H1 (cell line): ENCODE measurements at regions of chr17 and their contacts with region 1.

Region 1: DNA sequence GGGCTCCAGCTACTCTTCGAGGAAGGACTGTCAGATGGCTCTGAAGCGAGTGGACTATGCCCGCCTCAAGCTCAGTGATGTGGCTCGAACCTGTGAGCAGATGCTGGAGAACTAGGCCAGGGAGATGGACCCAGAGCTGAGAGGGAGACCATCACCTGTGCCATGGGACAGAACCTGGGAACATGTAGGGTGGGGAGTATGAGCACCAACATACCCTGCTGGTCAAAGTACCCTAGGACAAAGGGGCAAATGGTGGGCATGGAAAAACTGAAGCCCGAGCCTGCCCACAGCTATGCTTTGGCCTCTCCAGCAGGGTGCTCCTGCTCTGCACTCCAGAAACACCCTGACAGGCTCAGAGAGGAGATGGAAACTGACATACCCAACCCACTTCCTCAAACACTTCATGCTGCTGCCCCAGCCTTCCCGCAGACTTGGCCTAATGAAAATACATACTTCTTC is 1.9 kb downstream of the MED11 start:
- DNase-seq: no peak
- H3K4me3 ChIP-seq: no peak overlapping the region
- H3K27ac ChIP-seq: no peak overlapping the region
- H3K4me1 ChIP-seq: peaks cover 0 to under 1% (median 0%) of the 10 kb centered on the region in 4 experiments; a peak in 2 of 7 replicates
- H3K27me3 ChIP-seq: peaks cover 1 to 17% (median 6%) of the 10 kb centered on the region in 4 experiments; a peak in 6 of 7 replicates
- CTCF ChIP-seq: peak; percentile 16 to 39 (median 17); a peak in 3 of 4 replicates
- EP300 ChIP-seq: no peak
- POLR2A ChIP-seq: no peak
- RAD21 ChIP-seq: peak in 1 of 2 experiments; percentile 39; a peak in 2 of 4 replicates

Region 2: GRCh38 chr17:4678427-4679026 is 54.6 kb before region 1 on chr17:
- CTCF ChIA-PET with region 1: no interaction called
- POLR2A ChIA-PET with region 1: no interaction called
- DNase-seq: no peak
- H3K4me3 ChIP-seq: no peak overlapping the region
- H3K27ac ChIP-seq: no peak overlapping the region
- H3K4me1 ChIP-seq: no peaks in the 10 kb centered on the region
- H3K27me3 ChIP-seq: no peaks in the 10 kb centered on the region
- CTCF ChIP-seq: no peak
- EP300 ChIP-seq: no peak
- POLR2A ChIP-seq: no peak
- RAD21 ChIP-seq: no peak

Region 3: DNA sequence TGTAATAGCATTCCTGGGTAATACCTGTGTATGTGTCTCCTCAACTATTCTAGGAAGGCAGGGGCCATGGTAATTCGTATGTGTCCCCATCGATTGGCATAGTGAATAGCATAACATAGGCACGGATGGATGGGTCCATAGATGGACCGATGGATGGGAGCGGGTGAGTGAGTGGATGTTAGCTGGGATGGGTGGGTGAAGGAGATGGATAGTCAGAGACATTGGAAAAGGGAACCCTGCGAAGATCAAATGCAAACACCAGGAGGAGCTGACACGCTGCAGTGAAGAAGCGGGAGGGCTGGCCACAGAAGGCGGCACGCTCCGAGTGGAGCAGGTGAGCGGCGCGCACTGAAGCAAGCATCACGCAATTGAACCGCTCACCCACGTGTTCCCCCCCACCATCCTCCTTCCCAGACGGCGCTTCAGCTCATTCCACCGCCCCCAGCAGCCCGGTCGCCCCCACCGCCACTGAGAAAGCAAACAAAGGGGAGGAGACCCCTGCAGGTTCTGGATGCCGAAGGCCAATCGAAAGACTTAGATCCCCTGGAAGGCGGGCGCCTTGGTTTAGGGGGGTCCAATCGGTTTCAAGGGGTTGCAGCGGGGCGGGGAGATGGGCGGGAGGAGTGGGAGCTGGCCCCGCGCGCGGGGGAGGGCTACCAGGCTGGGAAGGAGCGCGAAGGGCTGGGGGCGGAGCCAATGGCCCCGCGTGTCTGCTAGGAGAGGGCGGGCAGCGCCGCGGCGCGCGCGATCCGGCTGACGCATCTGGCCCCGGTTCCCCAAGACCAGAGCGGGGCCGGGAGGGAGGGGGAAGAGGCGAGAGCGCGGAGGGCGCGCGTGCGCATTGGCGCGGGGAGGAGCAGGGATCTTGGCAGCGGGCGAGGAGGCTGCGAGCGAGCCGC is 23.1 kb before region 1 on chr17 and contains the start of gene ARRB2:
- CTCF ChIA-PET with region 1: interaction called, 8 read pairs
- POLR2A ChIA-PET with region 1: interaction called, 11 read pairs
- DNase-seq: peak; percentile 90 to 95
- H3K4me3 ChIP-seq: peak within 1 kb of the TSS; percentile 64 to 81 (median 70)
- H3K27ac ChIP-seq: peak within 1 kb of the TSS; percentile 50; the same call in 1 of the 2 replicates
- H3K4me1 ChIP-seq: peaks cover 6 to 15% (median 10%) of the 10 kb centered on the region in 4 experiments
- H3K27me3 ChIP-seq: no peaks in the 10 kb centered on the region
- CTCF ChIP-seq: peak; percentile 34 to 58 (median 41); a peak in 3 of 4 replicates
- EP300 ChIP-seq: no peak
- POLR2A ChIP-seq: peak in 1 of 2 experiments; percentile 48; a peak in 1 of 3 replicates
- RAD21 ChIP-seq: peak; percentile 31 to 56; a peak in 3 of 4 replicates
- total RNA-seq, gene ARRB2: 95.6 and 101 TPM in 2 replicates

Region 4: GRCh38 chr17:4744999-4745969 is 12.2 kb after region 1 on chr17:
- CTCF ChIA-PET with region 1: interaction called, 14 read pairs
- POLR2A ChIA-PET with region 1: interaction called, 3 read pairs
- DNase-seq: peak; percentile 41 to 82
- H3K4me3 ChIP-seq: peak overlapping the region; percentile 43 to 76 (median 61)
- H3K27ac ChIP-seq: no peak overlapping the region
- H3K4me1 ChIP-seq: peaks cover 0 to 3% (median under 1%) of the 10 kb centered on the region in 4 experiments; a peak in 3 of 7 replicates
- H3K27me3 ChIP-seq: peaks cover 6 to 32% (median 20%) of the 10 kb centered on the region in 4 experiments
- CTCF ChIP-seq: peak in 2 of 3 experiments; percentile 35 to 36; a peak in 3 of 4 replicates
- EP300 ChIP-seq: no peak
- POLR2A ChIP-seq: no peak
- RAD21 ChIP-seq: peak in 1 of 2 experiments; percentile 40; a peak in 2 of 4 replicates

Region 5: GRCh38 chr17:4759776-4760236 is 26.7 kb after region 1 on chr17:
- CTCF ChIA-PET with region 1: no interaction called
- POLR2A ChIA-PET with region 1: no interaction called
- DNase-seq: no peak
- H3K4me3 ChIP-seq: no peak overlapping the region
- H3K27ac ChIP-seq: no peak overlapping the region
- H3K4me1 ChIP-seq: no peaks in the 10 kb centered on the region
- H3K27me3 ChIP-seq: no peaks in the 10 kb centered on the region
- CTCF ChIP-seq: no peak
- EP300 ChIP-seq: no peak
- POLR2A ChIP-seq: no peak
- RAD21 ChIP-seq: no peak

Region 6: DNA sequence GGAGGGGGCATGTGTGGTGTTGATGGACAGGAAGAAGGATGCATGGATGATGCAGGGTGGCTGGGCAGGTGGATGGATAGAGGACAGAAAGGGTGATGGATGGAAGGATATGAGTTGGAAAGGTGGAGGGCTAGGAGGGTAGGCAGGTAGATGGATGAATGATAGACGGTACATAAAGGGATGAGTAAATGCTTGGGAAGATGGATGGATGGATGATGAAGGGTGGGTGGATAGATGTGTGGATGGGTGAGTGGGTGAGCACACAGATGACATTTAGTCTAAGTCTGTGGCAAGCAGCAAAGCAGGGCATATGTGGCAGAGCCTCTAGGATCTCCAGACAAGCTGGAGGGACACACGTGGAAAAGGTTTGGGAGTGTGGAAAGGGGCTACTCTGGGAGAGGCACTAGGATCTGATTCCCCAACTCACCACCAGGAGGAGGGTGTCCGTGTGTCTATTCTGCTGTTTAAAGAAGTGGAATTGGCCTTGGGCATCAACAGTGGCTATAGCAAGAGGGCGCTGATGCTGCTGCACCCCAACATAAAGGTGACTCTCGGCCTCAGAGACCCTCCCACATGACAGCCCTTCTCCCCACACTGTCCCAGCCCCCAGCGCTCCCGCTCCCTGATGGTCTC is 82.1 kb after region 1 on chr17:
- CTCF ChIA-PET with region 1: no interaction called
- POLR2A ChIA-PET with region 1: no interaction called
- DNase-seq: no peak
- H3K4me3 ChIP-seq: no peak overlapping the region
- H3K27ac ChIP-seq: no peak overlapping the region
- H3K4me1 ChIP-seq: no peaks in the 10 kb centered on the region
- H3K27me3 ChIP-seq: no peaks in the 10 kb centered on the region
- CTCF ChIP-seq: peak; percentile 58 to 80 (median 76)
- EP300 ChIP-seq: no peak
- POLR2A ChIP-seq: no peak
- RAD21 ChIP-seq: peak; percentile 54 to 59